ENCODE measurements at regions of chr15 and their contacts with region 1.

Region 1: DNA sequence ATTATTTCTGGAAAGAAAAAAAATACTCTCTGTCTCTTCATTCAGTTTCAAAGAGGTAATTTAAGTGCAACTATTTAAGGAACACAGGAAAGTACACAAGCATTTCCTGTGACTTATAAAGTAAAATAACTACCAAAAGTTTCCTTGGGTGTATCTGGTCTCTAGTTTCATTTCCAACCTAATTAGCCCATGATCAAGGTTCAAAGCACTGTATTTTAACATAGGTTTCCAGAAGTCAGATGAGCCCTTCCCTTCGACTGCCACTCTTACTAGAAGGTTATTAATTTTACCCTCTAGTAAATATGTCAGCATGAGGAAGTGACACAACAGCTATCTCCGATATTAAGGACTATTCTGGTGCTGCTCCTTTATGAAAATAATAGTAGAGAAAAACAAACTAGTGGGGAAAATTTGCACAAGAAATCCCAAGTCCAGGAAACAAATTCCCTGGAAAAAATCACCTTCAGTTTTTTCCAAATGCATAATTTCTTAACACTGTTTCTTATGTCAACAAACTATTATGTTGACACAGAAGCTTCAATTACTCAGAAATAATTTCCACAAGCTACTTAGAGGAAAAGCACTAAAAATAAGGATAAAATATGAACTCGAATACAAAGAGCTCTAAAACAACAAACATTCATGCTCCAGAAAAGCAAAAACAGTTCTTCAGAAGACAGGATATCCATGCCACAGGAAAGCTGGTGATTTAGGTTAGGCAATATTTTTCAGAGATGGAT is 35.3 kb downstream of the CCPG1 start:
- DNase-seq: no peak
- H3K4me3 ChIP-seq: no peak overlapping the region
- H3K27ac ChIP-seq: no peak overlapping the region
- H3K4me1 ChIP-seq: no peaks in the 10 kb centered on the region
- H3K27me3 ChIP-seq: no peaks in the 10 kb centered on the region
- CTCF ChIP-seq: no peak

Region 2: GRCh38 chr15:55279746-55280351 is 93.0 kb before region 1 on chr15:
- CTCF ChIA-PET with region 1: no interaction called
- dilution Hi-C with region 1: loop called (anchors 5 kb)
- in situ Hi-C with region 1: no loop called
- intact Hi-C with region 1: no loop called
- DNase-seq: peak; percentile 84
- H3K4me3 ChIP-seq: no peak overlapping the region
- H3K27ac ChIP-seq: peak overlapping the region; percentile 26
- H3K4me1 ChIP-seq: peaks cover 31% of the 10 kb centered on the region
- H3K27me3 ChIP-seq: no peaks in the 10 kb centered on the region
- CTCF ChIP-seq: no peak

Region 3: GRCh38 chr15:55318588-55319494 is 54.0 kb before region 1 on chr15 and contains the starts of genes PIGB and PIGBOS1:
- CTCF ChIA-PET with region 1: no interaction called
- dilution Hi-C with region 1: loop called (anchors 5 kb)
- in situ Hi-C with region 1: no loop called
- intact Hi-C with region 1: loop called (anchors 5 kb)
- DNase-seq: peak; percentile 85
- H3K4me3 ChIP-seq: peak within 1 kb of the TSS; percentile 63 to 88 (median 67)
- H3K27ac ChIP-seq: peak within 1 kb of the TSS; percentile 89
- H3K4me1 ChIP-seq: peaks cover 4% of the 10 kb centered on the region
- H3K27me3 ChIP-seq: no peaks in the 10 kb centered on the region
- CTCF ChIP-seq: no peak
- total RNA-seq, gene PIGB: 23.8 to 24.4 TPM
- total RNA-seq, gene PIGBOS1: 3.8 to 10.9 TPM

Measured in mammary epithelial cell (primary cell).